ENCODE measurements at regions of chr1 and their contacts with region 1.

Region 1: DNA sequence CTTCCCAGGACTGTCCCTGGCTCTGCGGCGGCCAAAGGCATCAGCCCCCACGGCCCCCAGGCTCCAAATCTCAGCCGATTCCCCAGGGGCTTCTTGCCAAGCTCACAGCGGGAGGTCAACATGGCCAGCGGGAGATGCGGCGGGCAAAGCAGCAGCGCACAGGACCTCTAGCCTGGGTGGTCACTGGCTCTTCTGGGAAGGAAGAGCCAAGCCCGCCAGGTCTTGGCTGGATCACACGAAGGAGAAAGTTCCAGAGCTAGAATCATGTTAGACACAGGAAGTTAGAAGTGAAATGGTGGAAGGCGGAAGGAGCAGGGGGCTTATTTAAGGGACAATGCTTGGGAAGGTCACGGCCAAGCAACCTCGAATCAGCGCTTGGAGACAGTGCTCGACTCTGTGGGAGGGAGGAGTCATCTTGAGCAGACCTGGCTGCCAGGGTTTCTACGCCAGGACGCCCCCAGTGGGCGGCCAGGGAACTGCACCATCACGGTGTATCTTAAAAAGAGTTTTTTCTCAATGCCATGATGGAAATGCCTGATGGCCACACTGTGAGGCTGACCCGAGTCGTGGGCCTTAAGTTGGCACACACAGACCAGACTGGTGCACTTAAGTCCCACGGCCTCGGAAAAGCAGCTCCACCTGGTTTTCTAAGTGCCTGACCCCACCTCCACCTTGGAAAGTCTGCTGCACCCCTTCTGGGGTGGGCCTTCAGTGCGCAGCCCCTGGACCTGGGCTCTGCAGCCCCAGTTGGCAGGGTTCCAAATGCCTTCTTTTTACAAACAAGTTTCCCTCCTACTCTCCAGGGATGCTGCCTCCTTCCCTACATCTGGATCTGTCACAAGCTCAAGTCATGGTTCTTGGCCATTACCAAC is 29.3 kb downstream of the SLC66A1 start:
- DNase-seq: peak; percentile 82 to 93
- ATAC-seq: peak; percentile 73
- H3K4me3 ChIP-seq: no peak overlapping the region
- H3K27ac ChIP-seq: no peak overlapping the region
- H3K4me1 ChIP-seq: no peaks in the 10 kb centered on the region
- H3K27me3 ChIP-seq: no peaks in the 10 kb centered on the region

Region 2: GRCh38 chr1:19436716-19437476 is 95.5 kb after region 1 on chr1:
- intact Hi-C with region 1: no loop called
- DNase-seq: peak; percentile 84 to 89
- ATAC-seq: peak; percentile 40
- H3K4me3 ChIP-seq: no peak overlapping the region
- H3K27ac ChIP-seq: peak overlapping the region; percentile 88 to 94
- H3K4me1 ChIP-seq: peaks cover 15 to 16% of the 10 kb centered on the region in 2 donors
- H3K27me3 ChIP-seq: no peaks in the 10 kb centered on the region

Region 3: DNA sequence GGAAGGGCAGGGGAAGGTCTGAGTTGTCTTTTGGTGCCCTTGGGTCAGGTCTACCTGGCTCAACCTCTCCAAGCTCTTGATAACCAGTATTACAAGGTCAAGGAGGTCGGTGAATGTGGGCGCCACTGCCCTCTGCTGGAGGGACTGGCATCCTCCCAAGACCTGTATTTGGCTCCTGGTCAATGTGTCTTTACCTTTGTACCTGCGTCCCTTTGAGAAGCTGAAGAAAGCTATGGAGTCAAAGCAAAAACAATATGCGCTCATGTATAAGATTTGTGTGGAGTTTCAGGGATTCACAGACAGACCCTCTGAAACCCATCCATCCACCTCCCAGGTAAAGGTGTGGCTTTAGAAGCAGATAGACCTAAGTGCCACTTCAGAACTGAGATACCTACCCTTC is 240.9 kb after region 1 on chr1:
- intact Hi-C with region 1: loop called in 1 of 2 experiments (anchors 10 kb)
- DNase-seq: peak; percentile 65 to 84
- ATAC-seq: no peak
- H3K4me3 ChIP-seq: no peak overlapping the region
- H3K27ac ChIP-seq: no peak overlapping the region
- H3K4me1 ChIP-seq: no peaks in the 10 kb centered on the region
- H3K27me3 ChIP-seq: no peaks in the 10 kb centered on the region